ENCODE measurements at regions of chr6 and their contacts with region 1.

Region 1: GRCh38 chr6:139544701-139545057 is 170.2 kb upstream of the CITED2 start:
- DNase-seq: no peak
- ATAC-seq: no peak

Region 2: DNA sequence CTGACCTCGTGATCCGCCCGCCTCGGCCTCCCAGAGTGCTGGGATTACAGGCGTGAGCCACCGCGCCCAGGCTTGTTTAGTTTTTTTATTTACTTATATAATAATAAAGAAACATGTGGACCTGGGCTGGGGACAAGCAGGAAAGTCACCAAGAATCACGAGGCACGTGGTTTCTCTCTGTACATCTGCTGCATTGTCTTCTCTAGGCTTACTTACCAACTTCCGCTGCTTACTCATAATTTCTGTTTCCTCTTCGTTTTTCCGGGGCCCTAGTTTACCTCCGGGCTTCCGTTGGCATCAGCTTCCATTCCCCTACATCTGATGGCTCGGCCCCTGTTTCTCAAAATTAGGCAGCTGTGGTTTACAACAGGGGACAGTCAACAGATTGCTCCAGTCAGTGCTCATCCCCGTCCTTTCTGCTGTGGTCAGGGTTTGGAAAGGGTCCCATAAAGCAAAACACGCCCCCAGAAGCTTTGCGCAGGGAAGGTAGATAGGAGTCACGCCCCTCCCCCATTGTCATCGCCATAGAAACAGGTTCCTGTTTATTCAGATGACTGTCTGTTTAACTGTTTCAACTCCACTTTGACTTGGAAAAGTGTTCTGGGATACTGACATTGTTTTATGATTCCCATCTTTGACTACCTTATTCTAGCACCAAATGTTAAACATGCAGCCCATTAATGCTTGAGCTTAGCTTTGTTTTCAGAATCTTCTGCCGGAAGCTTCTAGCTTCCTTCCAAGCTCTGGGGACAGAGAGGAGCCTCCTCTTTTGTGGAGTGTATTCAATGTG is 221.0 kb before region 1 on chr6:
- intact Hi-C with region 1: no loop called
- DNase-seq: peak; percentile 88
- ATAC-seq: peak; percentile 95

Region 3: DNA sequence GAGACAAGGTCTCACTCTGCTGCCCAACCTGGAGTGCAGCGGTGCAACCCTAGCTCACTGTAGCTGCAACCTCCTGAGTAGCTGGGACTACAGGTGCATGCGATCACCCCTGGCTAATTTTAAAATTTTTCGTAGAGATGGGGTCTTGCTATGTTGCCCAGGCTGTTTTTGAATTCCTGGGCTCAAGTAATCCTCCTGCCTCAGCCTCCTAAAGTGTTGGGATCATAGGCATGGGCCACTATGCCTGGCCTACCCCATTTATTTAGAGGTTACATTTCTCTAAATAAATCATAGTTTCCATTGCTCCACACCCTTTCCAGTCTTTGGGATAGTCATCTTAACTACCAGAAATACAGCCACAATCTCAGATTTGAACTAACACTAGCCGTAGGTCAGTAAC is 35.5 kb before region 1 on chr6:
- intact Hi-C with region 1: loop called (anchors 1 kb)
- DNase-seq: no peak
- ATAC-seq: no peak

Region 4: GRCh38 chr6:139597771-139598755 is 53.4 kb after region 1 on chr6:
- intact Hi-C with region 1: no loop called
- DNase-seq: peak; percentile 73
- ATAC-seq: peak; percentile 87

Measured in sciatic nerve (tissue), 2 donors.